ENCODE measurements at regions of chr12 and their contacts with region 1.

Region 1: GRCh38 chr12:9198012-9198411 is 10.2 kb downstream of the PZP start:
- DNase-seq: no peak
- H3K4me3 Mint-ChIP-seq: no peak overlapping the region
- H3K27ac Mint-ChIP-seq: no peak overlapping the region
- H3K4me1 Mint-ChIP-seq: no peaks in the 10 kb centered on the region
- H3K27me3 Mint-ChIP-seq: peaks cover 7% of the 10 kb centered on the region

Region 2: GRCh38 chr12:8449293-8449945 is 748.6 kb before region 1 on chr12:
- intact Hi-C with region 1: loop called (anchors 10 kb)
- DNase-seq: no peak
- H3K4me3 Mint-ChIP-seq: no peak overlapping the region
- H3K27ac Mint-ChIP-seq: no peak overlapping the region
- H3K4me1 Mint-ChIP-seq: no peaks in the 10 kb centered on the region
- H3K27me3 Mint-ChIP-seq: peaks cover 9% of the 10 kb centered on the region

Region 3: GRCh38 chr12:9184276-9184675 is 13.7 kb before region 1 on chr12:
- intact Hi-C with region 1: no loop called
- DNase-seq: no peak
- H3K4me3 Mint-ChIP-seq: no peak overlapping the region
- H3K27ac Mint-ChIP-seq: no peak overlapping the region
- H3K4me1 Mint-ChIP-seq: no peaks in the 10 kb centered on the region
- H3K27me3 Mint-ChIP-seq: peaks cover 1% of the 10 kb centered on the region

Region 4: GRCh38 chr12:9273276-9273675 is 75.3 kb after region 1 on chr12:
- intact Hi-C with region 1: no loop called
- DNase-seq: no peak
- H3K4me3 Mint-ChIP-seq: no peak overlapping the region
- H3K27ac Mint-ChIP-seq: no peak overlapping the region
- H3K4me1 Mint-ChIP-seq: no peaks in the 10 kb centered on the region
- H3K27me3 Mint-ChIP-seq: peaks cover 47% of the 10 kb centered on the region

Region 5: DNA sequence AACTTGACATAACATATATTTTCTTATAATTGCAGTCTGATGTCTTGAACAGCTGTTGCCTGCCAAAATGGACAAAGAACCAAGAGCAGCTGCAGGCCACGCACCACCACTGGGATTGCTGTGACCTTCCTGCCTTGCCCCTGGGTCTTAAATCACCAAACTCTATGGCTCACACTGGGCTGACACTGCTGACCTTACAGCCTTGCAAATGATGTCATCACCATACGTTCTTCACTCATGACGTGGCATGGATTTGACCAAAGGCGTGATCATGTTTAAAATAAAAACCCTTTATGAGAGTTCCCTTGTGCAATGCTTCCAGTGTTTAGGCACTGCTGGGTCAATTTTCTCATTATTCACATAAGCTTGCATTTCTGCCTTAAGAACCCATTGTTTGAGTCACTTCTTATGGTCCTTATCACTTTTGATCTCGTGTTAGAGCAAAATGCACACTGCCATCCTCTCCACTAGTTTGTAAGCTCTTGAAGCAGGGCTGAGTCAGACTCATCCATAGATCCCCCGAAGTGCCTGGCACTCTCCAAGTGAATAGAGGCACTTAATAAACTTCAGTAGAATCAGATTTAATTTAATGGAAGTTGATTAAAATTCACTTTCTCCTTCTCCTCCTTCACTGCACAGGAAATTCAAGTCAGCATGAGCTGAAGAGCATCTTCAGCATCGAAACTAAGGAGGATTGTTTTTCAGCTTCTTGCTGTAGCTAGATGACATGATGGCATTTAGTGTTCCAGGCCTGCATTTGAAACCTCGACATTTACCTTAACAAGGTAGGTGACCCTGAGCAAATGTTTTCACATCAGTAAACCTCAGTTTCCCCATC is 142.6 kb after region 1 on chr12:
- intact Hi-C with region 1: no loop called
- DNase-seq: no peak
- H3K4me3 Mint-ChIP-seq: no peak overlapping the region
- H3K27ac Mint-ChIP-seq: peak overlapping the region; percentile 9
- H3K4me1 Mint-ChIP-seq: peaks cover 19% of the 10 kb centered on the region
- H3K27me3 Mint-ChIP-seq: peaks cover 2% of the 10 kb centered on the region

Measured in activated T-helper 2 cell treated with anti-CD3 and anti-CD28 coated beads, Interferon-gamma antibody, Interleukin-2, Interleukin-4, amounts not matched to agents 10 μg/mL and 5 μg/mL and 100 μg/mL, durations not matched to agents 14 hours and 24 hours and 36 hours (primary cell).